ENCODE measurements at regions of chr4 and their contacts with region 1.

Region 1: DNA sequence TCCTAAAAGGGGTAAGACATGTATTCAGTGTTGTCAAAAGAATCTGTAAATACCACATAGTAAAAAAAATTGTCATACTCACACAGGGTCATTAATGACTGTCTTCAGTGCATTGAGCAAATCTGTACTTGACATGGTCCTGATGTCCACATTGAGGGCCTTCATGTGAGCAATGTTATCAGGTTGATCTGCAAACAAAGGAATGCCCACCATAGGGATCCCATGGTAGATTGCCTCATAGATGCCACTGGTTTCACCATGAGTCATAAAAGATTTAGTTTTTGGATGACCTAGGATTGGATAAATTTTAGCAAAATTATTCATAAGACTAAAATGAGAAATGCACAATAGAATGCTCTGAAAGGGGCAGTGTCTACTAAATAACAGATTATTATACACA is 38.1 kb upstream of the UGT2B15 start:
- DNase-seq: no peak
- H3K4me3 ChIP-seq: no peak overlapping the region
- H3K27ac ChIP-seq: no peak overlapping the region
- H3K4me1 ChIP-seq: no peaks in the 10 kb centered on the region
- H3K27me3 ChIP-seq: no peaks in the 10 kb centered on the region
- CTCF ChIP-seq: no peak
- POLR2A ChIP-seq: no peak

Region 2: DNA sequence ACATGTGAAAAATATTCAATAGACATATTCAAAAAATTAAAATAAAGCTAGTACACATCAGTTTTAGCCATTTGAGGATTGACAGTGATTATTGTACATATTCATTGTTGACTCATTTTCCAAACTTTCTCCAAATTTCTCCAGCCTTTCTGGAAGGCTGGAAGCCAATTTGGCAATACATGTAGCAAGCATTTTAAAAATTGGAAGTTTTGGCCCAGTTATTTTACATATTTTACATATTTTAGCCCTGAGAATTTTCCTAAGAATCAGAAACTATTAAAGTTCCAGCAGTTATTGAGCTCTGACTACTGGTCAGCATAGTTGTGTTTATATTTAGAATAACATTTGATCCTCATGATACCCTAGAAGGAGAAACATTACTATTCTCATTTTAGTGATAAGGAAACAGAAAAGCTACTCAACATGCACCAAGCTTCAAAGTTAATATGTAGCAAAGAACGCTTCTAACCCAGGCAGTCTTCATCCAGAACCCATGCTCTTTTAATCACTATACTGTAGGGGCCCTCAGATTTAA is 1629.4 kb after region 1 on chr4:
- intact Hi-C with region 1: loop called (anchors 10 kb)
- DNase-seq: no peak
- H3K4me3 ChIP-seq: no peak overlapping the region
- H3K27ac ChIP-seq: no peak overlapping the region
- H3K4me1 ChIP-seq: no peaks in the 10 kb centered on the region
- H3K27me3 ChIP-seq: no peaks in the 10 kb centered on the region
- CTCF ChIP-seq: no peak
- POLR2A ChIP-seq: no peak